IMR-90 (cell line): ENCODE measurements at regions of chr9 and their contacts with region 1.

Region 1: DNA sequence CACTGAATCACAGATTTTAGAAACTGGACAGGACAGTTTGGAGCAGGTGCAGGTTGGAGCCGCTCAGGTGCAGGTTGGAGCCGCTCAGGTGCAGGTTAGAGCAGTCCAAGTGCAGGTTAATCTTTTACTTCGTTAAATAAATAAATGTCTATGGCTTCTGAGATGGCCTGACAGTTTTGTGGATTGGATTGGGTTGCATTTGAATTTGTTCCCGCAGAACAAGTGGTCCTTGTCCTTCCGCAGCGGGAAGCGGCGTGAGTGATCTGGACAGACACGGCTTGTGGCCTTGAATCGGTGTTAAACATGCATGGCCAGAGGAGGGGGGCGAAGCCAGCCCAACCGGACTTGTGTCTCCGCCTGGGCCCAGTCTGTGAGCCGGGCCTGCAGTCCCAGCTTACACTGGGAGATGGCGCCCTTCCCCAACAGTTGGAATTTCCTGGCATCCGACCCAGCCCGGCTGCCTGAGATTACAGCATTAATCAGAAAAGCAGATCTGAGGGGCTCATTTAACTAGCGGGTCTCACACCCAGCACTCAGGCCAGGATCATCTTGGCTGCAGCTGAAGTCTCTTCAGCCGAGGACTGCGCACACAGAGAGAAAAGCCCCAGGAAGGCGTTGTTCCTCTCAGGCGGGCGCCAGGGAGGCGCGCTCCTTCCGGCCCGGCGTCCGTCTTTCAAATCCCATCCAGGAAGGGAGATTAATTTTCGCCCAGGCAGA is 1.5 kb upstream of the OLFM1 start:
- DNase-seq: peak; percentile 43
- ATAC-seq: peak; percentile 79
- H3K4me3 ChIP-seq: no peak overlapping the region
- H3K27ac ChIP-seq: no peak overlapping the region
- H3K4me1 ChIP-seq: no peaks in the 10 kb centered on the region; the same call in 1 of the 2 replicates
- H3K27me3 ChIP-seq: peaks cover 56% of the 10 kb centered on the region
- CTCF ChIP-seq: peak; percentile 81
- POLR2A ChIP-seq: no peak
- RAD21 ChIP-seq: peak; percentile 88

Region 2: DNA sequence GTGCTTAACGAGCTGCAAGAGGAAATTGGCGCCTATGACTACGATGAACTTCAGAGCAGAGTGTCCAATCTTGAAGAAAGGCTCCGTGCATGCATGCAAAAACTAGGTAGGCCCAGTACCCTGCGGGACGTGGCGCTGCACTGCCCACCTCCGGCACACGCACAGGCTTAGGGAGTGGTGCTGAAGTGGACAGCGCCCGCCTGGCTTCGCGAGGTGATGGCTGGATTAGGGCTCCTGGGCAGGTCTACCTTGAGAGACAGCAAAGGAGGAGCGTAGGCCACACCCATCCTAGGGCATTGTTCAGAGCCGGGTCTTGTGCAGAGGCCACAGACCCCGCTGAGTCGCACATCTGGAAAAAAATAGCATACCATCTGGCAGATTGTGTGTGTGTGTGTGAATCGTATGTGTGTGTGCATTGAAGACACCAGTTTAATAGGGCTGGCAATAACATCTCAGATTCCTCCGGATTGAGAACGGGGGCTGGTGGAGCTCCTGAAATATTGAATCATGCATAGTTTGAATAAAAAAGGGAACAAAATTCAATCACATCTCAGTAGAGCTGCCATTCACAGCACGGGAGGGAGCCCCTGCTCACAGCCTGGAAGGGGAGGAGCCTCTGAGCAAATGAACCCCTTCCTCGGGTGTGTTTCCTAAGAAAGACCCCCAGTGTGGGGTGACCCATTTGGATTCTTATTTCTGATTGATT is 12.6 kb after region 1 on chr9:
- CTCF ChIA-PET with region 1: no interaction called
- POLR2A ChIA-PET with region 1: no interaction called
- dilution Hi-C with region 1: no loop called
- in situ Hi-C with region 1: no loop called
- intact Hi-C with region 1: no loop called
- DNase-seq: no peak
- ATAC-seq: peak; percentile 56; the same call in 1 of the 2 replicates
- H3K4me3 ChIP-seq: no peak overlapping the region
- H3K27ac ChIP-seq: no peak overlapping the region
- H3K4me1 ChIP-seq: no peaks in the 10 kb centered on the region
- H3K27me3 ChIP-seq: no peaks in the 10 kb centered on the region; the same call in 1 of the 2 replicates
- CTCF ChIP-seq: no peak
- POLR2A ChIP-seq: no peak
- RAD21 ChIP-seq: no peak

Region 3: GRCh38 chr9:135215571-135216161 is 129.7 kb after region 1 on chr9:
- CTCF ChIA-PET with region 1: no interaction called
- POLR2A ChIA-PET with region 1: no interaction called
- dilution Hi-C with region 1: no loop called
- in situ Hi-C with region 1: no loop called
- intact Hi-C with region 1: no loop called
- DNase-seq: no peak
- ATAC-seq: no peak
- H3K4me3 ChIP-seq: no peak overlapping the region
- H3K27ac ChIP-seq: no peak overlapping the region
- H3K4me1 ChIP-seq: no peaks in the 10 kb centered on the region
- H3K27me3 ChIP-seq: no peaks in the 10 kb centered on the region
- CTCF ChIP-seq: no peak
- POLR2A ChIP-seq: no peak
- RAD21 ChIP-seq: no peak

Region 4: DNA sequence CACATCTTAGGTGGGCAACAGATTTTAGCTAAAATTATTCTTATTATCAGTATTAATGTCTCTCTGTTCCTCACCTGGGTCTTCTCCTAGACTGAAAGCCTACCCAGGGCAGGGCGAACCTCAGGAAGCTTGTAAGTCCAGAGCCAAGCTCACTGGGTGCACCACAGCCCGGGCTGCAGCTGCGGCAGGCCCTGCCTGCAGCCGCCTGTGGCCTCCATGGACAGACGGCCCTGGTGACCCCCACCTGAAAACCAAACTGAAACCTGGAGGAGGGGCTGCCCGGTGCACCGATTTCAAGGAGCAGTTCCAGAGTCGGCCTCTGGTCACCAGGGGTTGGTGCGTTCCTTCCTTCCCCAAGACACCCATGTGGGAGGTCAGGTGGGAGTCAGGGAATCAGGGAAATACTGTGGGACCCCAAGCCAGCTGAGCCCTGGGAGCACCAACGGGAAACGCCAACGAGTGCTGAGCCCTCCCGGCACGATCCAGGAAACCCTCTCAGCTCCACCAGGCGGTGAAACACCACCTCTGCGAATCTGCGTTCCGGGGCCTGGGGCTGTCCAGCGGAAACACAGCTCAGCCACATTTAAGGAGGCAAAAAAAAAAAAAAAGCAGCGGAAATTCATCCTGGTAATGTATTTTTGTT is 325.0 kb after region 1 on chr9:
- CTCF ChIA-PET with region 1: interaction called, 3 read pairs
- POLR2A ChIA-PET with region 1: no interaction called
- dilution Hi-C with region 1: no loop called
- in situ Hi-C with region 1: loop called (anchors 5 kb)
- intact Hi-C with region 1: loop called (anchors 1 kb)
- DNase-seq: no peak
- ATAC-seq: no peak
- H3K4me3 ChIP-seq: no peak overlapping the region
- H3K27ac ChIP-seq: no peak overlapping the region
- H3K4me1 ChIP-seq: no peaks in the 10 kb centered on the region
- H3K27me3 ChIP-seq: peaks cover 5% of the 10 kb centered on the region; the same call in 1 of the 2 replicates
- CTCF ChIP-seq: no peak
- POLR2A ChIP-seq: no peak
- RAD21 ChIP-seq: no peak

Region 5: GRCh38 chr9:135480071-135480941 is 394.3 kb after region 1 on chr9:
- CTCF ChIA-PET with region 1: no interaction called
- POLR2A ChIA-PET with region 1: no interaction called
- dilution Hi-C with region 1: no loop called
- in situ Hi-C with region 1: no loop called
- intact Hi-C with region 1: loop called (anchors 2 kb)
- DNase-seq: peak; percentile 20
- ATAC-seq: peak; percentile 85
- H3K4me3 ChIP-seq: peak overlapping the region; percentile 78
- H3K27ac ChIP-seq: peak overlapping the region; percentile 1; the same call in 1 of the 2 replicates
- H3K4me1 ChIP-seq: peaks cover 5% of the 10 kb centered on the region; the same call in 1 of the 2 replicates
- H3K27me3 ChIP-seq: no peaks in the 10 kb centered on the region
- CTCF ChIP-seq: no peak
- POLR2A ChIP-seq: no peak
- RAD21 ChIP-seq: no peak